MCF 10A (cell line): ENCODE measurements at regions of chr11 and their contacts with region 1.

Region 1: GRCh38 chr11:112195906-112196305 is 20.6 kb downstream of the BCO2 start:
- DNase-seq: peak; percentile 80
- H3K4me3 Mint-ChIP-seq: peak overlapping the region; percentile 69
- H3K27ac Mint-ChIP-seq: peak overlapping the region; percentile 90
- H3K4me1 Mint-ChIP-seq: peaks cover 16% of the 10 kb centered on the region
- H3K27me3 Mint-ChIP-seq: no peaks in the 10 kb centered on the region
- CTCF ChIP-seq: no peak

Region 2: DNA sequence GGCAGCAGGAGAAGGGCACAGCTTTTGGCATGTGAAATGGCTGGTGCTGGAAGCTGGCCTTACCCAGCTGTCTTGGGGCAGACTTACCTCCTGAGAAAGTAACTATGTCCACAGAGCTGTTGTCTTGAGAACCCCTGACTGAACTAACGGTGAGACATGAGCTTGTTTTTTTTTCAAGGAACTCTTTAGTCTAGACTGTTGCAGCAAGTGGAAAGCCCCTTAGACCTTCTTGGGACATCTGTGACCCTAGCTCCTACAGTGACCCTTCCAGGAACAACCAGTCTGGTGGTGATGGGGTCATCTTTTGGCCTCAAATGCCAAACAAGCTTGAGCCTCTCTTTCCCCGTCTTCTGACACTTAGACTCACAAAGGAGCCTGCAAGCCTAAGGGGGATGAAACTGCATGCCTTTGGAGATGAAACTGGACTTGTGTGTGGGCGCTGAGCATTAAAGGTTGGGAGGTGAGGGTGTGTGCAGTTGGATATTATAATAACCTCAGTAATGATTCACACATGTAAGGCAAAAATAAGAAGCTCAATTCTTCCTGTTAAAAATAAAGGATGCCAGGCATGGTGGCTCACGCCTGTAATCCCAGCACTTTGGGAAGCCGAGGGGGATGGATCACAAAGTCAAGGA is 73.8 kb before region 1 on chr11:
- CTCF ChIA-PET with region 1: interaction called, 4 read pairs
- POLR2A ChIA-PET with region 1: interaction called, 18 read pairs
- intact Hi-C with region 1: no loop called
- DNase-seq: no peak
- H3K4me3 Mint-ChIP-seq: no peak overlapping the region
- H3K27ac Mint-ChIP-seq: no peak overlapping the region
- H3K4me1 Mint-ChIP-seq: peaks cover 9% of the 10 kb centered on the region
- H3K27me3 Mint-ChIP-seq: no peaks in the 10 kb centered on the region
- CTCF ChIP-seq: no peak

Region 3: GRCh38 chr11:112128483-112129121 is 67.3 kb before region 1 on chr11:
- CTCF ChIA-PET with region 1: no interaction called
- POLR2A ChIA-PET with region 1: interaction called, 11 read pairs
- intact Hi-C with region 1: no loop called
- DNase-seq: peak; percentile 85
- H3K4me3 Mint-ChIP-seq: peak overlapping the region; percentile 13
- H3K27ac Mint-ChIP-seq: peak overlapping the region; percentile 57
- H3K4me1 Mint-ChIP-seq: peaks cover 32% of the 10 kb centered on the region
- H3K27me3 Mint-ChIP-seq: no peaks in the 10 kb centered on the region
- CTCF ChIP-seq: no peak

Region 4: GRCh38 chr11:112156956-112157766 is 38.7 kb before region 1 on chr11:
- CTCF ChIA-PET with region 1: interaction called, 3 read pairs
- POLR2A ChIA-PET with region 1: interaction called, 68 read pairs
- intact Hi-C with region 1: no loop called
- DNase-seq: peak; percentile 98
- H3K4me3 Mint-ChIP-seq: peak overlapping the region; percentile 51
- H3K27ac Mint-ChIP-seq: peak overlapping the region; percentile 76
- H3K4me1 Mint-ChIP-seq: peaks cover 39% of the 10 kb centered on the region
- H3K27me3 Mint-ChIP-seq: no peaks in the 10 kb centered on the region
- CTCF ChIP-seq: no peak

Region 5: GRCh38 chr11:112174789-112175598 is 20.9 kb before region 1 on chr11 and contains the start of gene BCO2:
- CTCF ChIA-PET with region 1: interaction called, 5 read pairs
- POLR2A ChIA-PET with region 1: interaction called, 14 read pairs
- intact Hi-C with region 1: no loop called
- DNase-seq: peak; percentile 83
- H3K4me3 Mint-ChIP-seq: peak within 1 kb of the TSS; percentile 66
- H3K27ac Mint-ChIP-seq: peak within 1 kb of the TSS; percentile 93
- H3K4me1 Mint-ChIP-seq: peaks cover 15% of the 10 kb centered on the region
- H3K27me3 Mint-ChIP-seq: no peaks in the 10 kb centered on the region
- CTCF ChIP-seq: peak; percentile 83
- total RNA-seq, gene BCO2: 0.93 TPM in 1 of 2 replicates, not detected in the other

Region 6: GRCh38 chr11:112226062-112226830 is 30.3 kb after region 1 on chr11 and contains the start of gene PTS:
- CTCF ChIA-PET with region 1: interaction called, 3 read pairs
- POLR2A ChIA-PET with region 1: interaction called, 15 read pairs
- intact Hi-C with region 1: no loop called
- DNase-seq: peak; percentile 90
- H3K4me3 Mint-ChIP-seq: peak within 1 kb of the TSS; percentile 88
- H3K27ac Mint-ChIP-seq: peak within 1 kb of the TSS; percentile 96
- H3K4me1 Mint-ChIP-seq: peaks cover 19% of the 10 kb centered on the region
- H3K27me3 Mint-ChIP-seq: no peaks in the 10 kb centered on the region
- CTCF ChIP-seq: no peak
- total RNA-seq, gene PTS: 68.3 and 79.4 TPM in 2 replicates

Region 7: GRCh38 chr11:113261709-113262475 is 1066.0 kb after region 1 on chr11:
- CTCF ChIA-PET with region 1: no interaction called
- POLR2A ChIA-PET with region 1: no interaction called
- intact Hi-C with region 1: no loop called
- DNase-seq: peak; percentile 21
- H3K4me3 Mint-ChIP-seq: no peak overlapping the region
- H3K27ac Mint-ChIP-seq: no peak overlapping the region
- H3K4me1 Mint-ChIP-seq: no peaks in the 10 kb centered on the region
- H3K27me3 Mint-ChIP-seq: no peaks in the 10 kb centered on the region
- CTCF ChIP-seq: no peak